HepG2 (cell line): ENCODE measurements at regions of chr2 and their contacts with region 1.

Region 1: GRCh38 chr2:235543104-235543762 is 49.4 kb downstream of the AGAP1 start:
- DNase-seq: no peak
- ATAC-seq: peak; percentile 42
- H3K4me3 ChIP-seq: peak overlapping the region in 1 of 3 experiments; percentile 23; a peak in 1 of 6 replicates
- H3K27ac ChIP-seq: peak overlapping the region; percentile 50
- H3K4me1 ChIP-seq: peaks cover 91% of the 10 kb centered on the region
- H3K27me3 ChIP-seq: no peaks in the 10 kb centered on the region
- CTCF ChIP-seq: no peak
- EP300 ChIP-seq: no peak
- POLR2A ChIP-seq: no peak
- RAD21 ChIP-seq: no peak

Region 2: GRCh38 chr2:235493775-235494715 is 49.2 kb before region 1 on chr2 and contains the start of gene AGAP1:
- CTCF ChIA-PET with region 1: no interaction called
- POLR2A ChIA-PET with region 1: interaction called, 4 read pairs
- in situ Hi-C with region 1: no loop called
- intact Hi-C with region 1: loop called (anchors 2 kb)
- DNase-seq: peak; percentile 74
- ATAC-seq: peak; percentile 82
- H3K4me3 ChIP-seq: peak within 1 kb of the TSS; percentile 74 to 86 (median 75)
- H3K27ac ChIP-seq: peak within 1 kb of the TSS; percentile 35
- H3K4me1 ChIP-seq: peaks cover 49% of the 10 kb centered on the region
- H3K27me3 ChIP-seq: peaks cover 0 to 14% of the 10 kb centered on the region in 2 experiments; a peak in 2 of 5 replicates
- CTCF ChIP-seq: no peak
- EP300 ChIP-seq: no peak
- POLR2A ChIP-seq: peak in 1 of 2 experiments; percentile 50; a peak in 1 of 4 replicates
- RAD21 ChIP-seq: peak; percentile 2; the same call in 1 of the 2 replicates
- total RNA-seq, gene AGAP1: 21.2 and 21.3 TPM in 2 replicates

Region 3: DNA sequence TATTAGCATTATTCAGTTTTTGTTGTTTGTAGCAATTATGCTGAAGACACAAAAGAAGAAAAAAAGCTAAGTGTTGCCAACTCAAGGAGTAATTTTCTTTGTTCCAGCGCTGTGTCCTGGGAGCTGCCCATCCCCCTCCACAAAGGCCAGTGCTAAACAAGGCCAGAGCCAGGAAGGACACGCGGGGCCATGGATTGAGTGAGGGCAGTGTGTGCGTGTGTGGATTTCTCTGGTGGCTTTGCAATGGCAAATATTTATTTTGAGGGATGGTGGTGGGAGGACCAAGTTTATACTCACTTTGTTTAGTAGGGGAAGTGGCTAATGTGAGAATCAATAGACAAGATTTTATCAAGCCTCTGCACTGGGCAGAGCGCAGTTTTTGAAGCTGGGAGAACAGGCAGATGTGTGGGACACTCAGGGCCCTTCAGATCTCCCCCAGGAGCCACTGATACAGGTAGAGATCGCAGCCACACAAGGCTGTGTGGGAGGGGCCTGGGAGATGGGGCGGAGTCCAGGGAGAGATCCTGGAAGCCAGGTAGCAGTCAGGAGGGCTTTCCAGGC is 38.0 kb before region 1 on chr2:
- CTCF ChIA-PET with region 1: no interaction called
- POLR2A ChIA-PET with region 1: interaction called, 3 read pairs
- in situ Hi-C with region 1: no loop called
- intact Hi-C with region 1: loop called (anchors 2 kb)
- DNase-seq: peak; percentile 85
- ATAC-seq: peak; percentile 87
- H3K4me3 ChIP-seq: peak overlapping the region in 2 of 3 experiments; percentile 2 to 56; a peak in 3 of 6 replicates
- H3K27ac ChIP-seq: peak overlapping the region; percentile 75
- H3K4me1 ChIP-seq: peaks cover 71% of the 10 kb centered on the region
- H3K27me3 ChIP-seq: no peaks in the 10 kb centered on the region
- CTCF ChIP-seq: no peak
- EP300 ChIP-seq: peak; percentile 45 to 80; a peak in 3 of 4 replicates
- POLR2A ChIP-seq: no peak
- RAD21 ChIP-seq: no peak

Region 4: DNA sequence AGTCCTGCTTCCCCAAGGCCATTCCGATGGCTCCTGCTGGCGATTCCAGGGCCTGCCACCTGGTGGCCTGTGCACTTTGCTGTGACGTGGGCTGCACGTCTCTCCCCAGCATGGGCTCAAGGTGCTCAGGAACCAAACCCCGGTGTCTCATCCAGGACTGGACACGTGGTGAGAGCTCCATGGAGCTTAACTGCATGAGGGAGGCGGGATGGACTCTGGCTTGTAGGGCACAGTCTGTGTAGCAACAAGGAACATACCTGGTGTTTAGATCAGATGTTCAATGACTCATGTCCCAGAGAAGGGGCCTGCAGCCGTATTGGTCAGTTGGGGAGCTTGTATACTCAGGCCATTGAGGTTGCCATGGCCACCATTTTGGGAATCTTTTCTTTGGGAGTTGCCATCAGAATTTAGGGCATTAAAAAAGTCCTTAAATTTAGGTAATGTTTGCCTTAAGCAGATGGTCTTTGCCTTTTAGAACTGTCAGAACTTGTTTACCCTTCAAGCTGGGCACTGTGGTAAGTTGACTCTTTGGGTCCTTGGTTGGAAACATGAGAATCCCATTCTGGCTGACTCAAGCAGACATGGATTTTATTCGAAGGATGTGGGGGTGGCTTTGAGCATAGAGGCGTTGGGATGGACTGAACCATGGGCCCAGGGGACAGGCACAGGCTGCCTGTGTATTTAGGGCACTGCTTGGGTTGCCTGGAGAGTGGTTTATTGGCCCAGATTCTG is 28.4 kb before region 1 on chr2:
- CTCF ChIA-PET with region 1: no interaction called
- POLR2A ChIA-PET with region 1: interaction called, 9 read pairs
- in situ Hi-C with region 1: no loop called
- intact Hi-C with region 1: loop called (anchors 2 kb)
- DNase-seq: peak; percentile 94
- ATAC-seq: peak; percentile 96
- H3K4me3 ChIP-seq: no peak overlapping the region; a peak in 1 of 6 replicates
- H3K27ac ChIP-seq: peak overlapping the region; percentile 82
- H3K4me1 ChIP-seq: peaks cover 60% of the 10 kb centered on the region
- H3K27me3 ChIP-seq: no peaks in the 10 kb centered on the region
- CTCF ChIP-seq: peak; percentile 96
- EP300 ChIP-seq: peak; percentile 77 to 97
- POLR2A ChIP-seq: no peak
- RAD21 ChIP-seq: peak; percentile 92

Region 5: GRCh38 chr2:235577404-235578330 is 34.4 kb after region 1 on chr2:
- CTCF ChIA-PET with region 1: no interaction called
- POLR2A ChIA-PET with region 1: interaction called, 3 read pairs
- in situ Hi-C with region 1: no loop called
- intact Hi-C with region 1: loop called (anchors 5 kb)
- DNase-seq: peak; percentile 85
- ATAC-seq: peak; percentile 87
- H3K4me3 ChIP-seq: peak overlapping the region; percentile 8 to 59 (median 53)
- H3K27ac ChIP-seq: peak overlapping the region; percentile 53
- H3K4me1 ChIP-seq: peaks cover 70% of the 10 kb centered on the region
- H3K27me3 ChIP-seq: no peaks in the 10 kb centered on the region
- CTCF ChIP-seq: no peak; the same call in 1 of the 2 replicates
- EP300 ChIP-seq: no peak; a peak in 1 of 4 replicates
- POLR2A ChIP-seq: no peak
- RAD21 ChIP-seq: no peak

Region 6: GRCh38 chr2:236040600-236041320 is 497.5 kb after region 1 on chr2:
- CTCF ChIA-PET with region 1: no interaction called
- POLR2A ChIA-PET with region 1: no interaction called
- in situ Hi-C with region 1: no loop called
- intact Hi-C with region 1: no loop called
- DNase-seq: no peak
- ATAC-seq: no peak
- H3K4me3 ChIP-seq: no peak overlapping the region
- H3K27ac ChIP-seq: no peak overlapping the region
- H3K4me1 ChIP-seq: no peaks in the 10 kb centered on the region
- H3K27me3 ChIP-seq: no peaks in the 10 kb centered on the region
- CTCF ChIP-seq: no peak
- EP300 ChIP-seq: no peak
- POLR2A ChIP-seq: no peak
- RAD21 ChIP-seq: no peak